H1 (cell line): ENCODE measurements at regions of chr7 and their contacts with region 1.

Region 1: GRCh38 chr7:129343099-129343700 is 91.0 kb upstream of the STRIP2 start:
- DNase-seq: no peak
- H3K4me3 ChIP-seq: no peak overlapping the region
- H3K27ac ChIP-seq: no peak overlapping the region
- H3K4me1 ChIP-seq: peaks cover 0 to 12% (median 2%) of the 10 kb centered on the region in 4 experiments; a peak in 2 of 7 replicates
- H3K27me3 ChIP-seq: no peaks in the 10 kb centered on the region
- CTCF ChIP-seq: peak in 1 of 3 experiments; percentile 53; a peak in 2 of 4 replicates
- EP300 ChIP-seq: no peak
- POLR2A ChIP-seq: no peak
- RAD21 ChIP-seq: peak; percentile 37 to 51

Region 2: GRCh38 chr7:129271500-129272355 is 71.5 kb before region 1 on chr7:
- CTCF ChIA-PET with region 1: no interaction called
- POLR2A ChIA-PET with region 1: no interaction called
- DNase-seq: peak in 1 of 2 experiments; percentile 64
- H3K4me3 ChIP-seq: no peak overlapping the region
- H3K27ac ChIP-seq: no peak overlapping the region
- H3K4me1 ChIP-seq: no peaks in the 10 kb centered on the region
- H3K27me3 ChIP-seq: no peaks in the 10 kb centered on the region
- CTCF ChIP-seq: peak in 2 of 3 experiments; percentile 76 to 81; a peak in 3 of 4 replicates
- EP300 ChIP-seq: no peak
- POLR2A ChIP-seq: no peak
- RAD21 ChIP-seq: peak; percentile 81 to 89

Region 3: DNA sequence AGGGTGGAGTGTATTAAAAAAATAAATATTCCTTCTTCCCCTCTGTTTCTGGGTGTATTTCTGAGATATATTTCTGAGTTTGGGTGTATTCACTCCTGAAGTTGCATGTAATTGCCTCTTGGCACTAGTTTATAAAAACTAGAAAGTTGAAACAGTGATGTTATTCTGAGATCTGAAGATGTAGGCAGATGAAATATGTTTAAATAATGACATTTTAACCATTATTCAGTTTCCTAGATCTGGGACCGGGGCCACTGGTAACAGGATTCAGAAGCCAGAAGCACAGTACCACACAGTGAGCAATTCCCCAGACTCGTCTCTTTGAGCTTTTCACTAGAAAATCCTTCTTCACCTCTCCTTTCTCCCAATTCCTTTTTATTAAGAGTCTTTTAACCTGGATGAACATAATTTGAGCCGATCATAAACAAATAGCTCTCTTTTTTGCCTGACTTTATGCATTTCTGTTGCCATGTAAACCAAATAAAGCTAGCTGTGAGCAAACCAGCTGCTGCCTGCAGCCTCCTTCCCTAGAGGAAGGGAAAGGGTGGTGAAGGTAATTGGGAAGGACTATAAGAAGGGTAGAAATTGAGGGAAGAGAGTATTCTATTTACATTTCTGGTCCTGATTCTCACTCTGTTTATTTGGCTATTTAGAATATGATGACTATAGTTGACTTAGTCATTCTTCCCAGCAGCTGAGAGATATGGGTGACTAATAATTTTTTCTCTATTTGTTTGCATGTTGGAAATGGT is 10.7 kb before region 1 on chr7:
- CTCF ChIA-PET with region 1: interaction called, 14 read pairs
- POLR2A ChIA-PET with region 1: no interaction called
- DNase-seq: no peak
- H3K4me3 ChIP-seq: no peak overlapping the region
- H3K27ac ChIP-seq: no peak overlapping the region
- H3K4me1 ChIP-seq: no peaks in the 10 kb centered on the region
- H3K27me3 ChIP-seq: no peaks in the 10 kb centered on the region
- CTCF ChIP-seq: no peak
- EP300 ChIP-seq: no peak
- POLR2A ChIP-seq: no peak
- RAD21 ChIP-seq: no peak

Region 4: GRCh38 chr7:129401967-129402860 is 59.0 kb after region 1 on chr7:
- CTCF ChIA-PET with region 1: interaction called, 11 read pairs
- POLR2A ChIA-PET with region 1: no interaction called
- DNase-seq: no peak
- H3K4me3 ChIP-seq: no peak overlapping the region
- H3K27ac ChIP-seq: no peak overlapping the region
- H3K4me1 ChIP-seq: peaks cover 0 to 3% (median 1%) of the 10 kb centered on the region in 4 experiments; a peak in 1 of 7 replicates
- H3K27me3 ChIP-seq: no peaks in the 10 kb centered on the region
- CTCF ChIP-seq: peak in 2 of 3 experiments; percentile 5 to 23; a peak in 2 of 4 replicates
- EP300 ChIP-seq: no peak
- POLR2A ChIP-seq: no peak
- RAD21 ChIP-seq: peak; percentile 43 to 52

Region 5: DNA sequence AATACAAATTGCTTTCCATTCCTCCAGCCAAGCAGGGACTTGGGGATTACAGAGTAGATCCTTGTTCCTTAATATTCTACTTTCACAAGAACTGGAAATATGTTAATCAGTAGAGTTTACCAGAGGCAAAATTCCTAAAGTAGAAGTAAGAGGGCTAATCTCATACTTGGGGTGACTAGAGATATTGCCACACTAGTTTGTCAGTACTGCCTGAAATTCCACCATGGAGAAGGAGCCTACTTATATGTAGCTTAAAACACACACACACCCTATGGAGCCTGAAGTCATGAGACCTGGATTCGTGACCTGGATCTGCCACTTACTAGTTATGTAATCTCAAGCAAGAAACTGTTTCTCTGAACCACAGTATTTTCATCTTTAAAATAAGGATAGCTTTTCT is 124.9 kb after region 1 on chr7:
- CTCF ChIA-PET with region 1: interaction called, 23 read pairs
- POLR2A ChIA-PET with region 1: no interaction called
- DNase-seq: no peak
- H3K4me3 ChIP-seq: no peak overlapping the region
- H3K27ac ChIP-seq: no peak overlapping the region
- H3K4me1 ChIP-seq: peaks cover 0 to 8% (median 6%) of the 10 kb centered on the region in 4 experiments; a peak in 4 of 7 replicates
- H3K27me3 ChIP-seq: no peaks in the 10 kb centered on the region
- CTCF ChIP-seq: no peak
- EP300 ChIP-seq: no peak
- POLR2A ChIP-seq: no peak
- RAD21 ChIP-seq: no peak